Tibial artery (tissue), 4 donors: ENCODE measurements at regions of chr11 and their contacts with region 1.

Region 1: DNA sequence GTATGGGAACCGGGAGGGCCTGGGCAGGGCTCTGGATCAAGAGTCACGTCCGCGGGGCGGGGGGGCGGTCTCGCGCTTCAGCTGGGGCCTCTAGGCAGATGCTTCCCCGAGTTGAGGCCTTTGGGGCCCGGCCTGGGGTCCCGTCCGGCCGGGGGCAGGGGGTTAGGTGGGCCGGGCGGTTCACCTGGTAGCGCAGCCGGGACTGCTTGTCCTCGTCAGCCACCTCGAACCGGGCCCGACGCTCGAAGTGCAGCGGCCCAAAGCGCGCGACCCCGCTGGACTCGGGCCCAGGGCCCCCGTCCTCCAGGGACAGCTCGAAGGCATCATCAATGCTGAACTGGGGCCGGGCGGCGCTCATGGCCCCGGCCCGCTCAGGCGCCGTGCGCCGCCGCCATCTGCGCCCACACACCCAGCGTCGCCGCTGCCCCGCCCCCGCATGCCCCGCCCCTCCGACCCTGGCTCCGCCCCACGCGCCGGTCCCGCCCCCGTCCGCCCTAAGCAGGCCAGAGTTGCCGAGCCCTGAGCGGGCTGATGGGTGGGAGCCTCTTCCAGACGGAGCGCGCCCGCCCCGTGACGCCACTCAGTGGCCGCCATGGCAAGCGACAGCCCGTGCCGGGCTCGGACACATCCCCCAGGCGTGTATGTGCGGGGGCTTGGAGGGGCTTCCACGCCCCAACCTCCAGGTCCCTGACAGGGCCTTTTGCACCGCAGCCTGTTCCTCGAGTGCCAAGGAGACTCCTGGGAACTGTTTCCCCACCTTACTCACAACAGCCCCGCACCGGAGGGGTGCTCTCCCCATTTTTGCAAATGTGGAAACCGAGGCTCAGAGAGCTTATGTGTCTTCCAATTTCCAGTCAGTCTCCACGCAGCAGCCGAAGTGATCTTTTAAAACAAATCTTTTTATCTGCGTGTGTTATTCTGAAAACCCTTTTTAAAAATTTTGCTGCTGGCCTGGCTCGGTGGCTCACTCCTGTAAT is at the start of gene TMEM134:
- DNase-seq: peak; percentile 90 to 95
- H3K4me3 ChIP-seq: peak within 1 kb of the TSS; percentile 68 to 81
- H3K27ac ChIP-seq: peak within 1 kb of the TSS; percentile 84 to 95
- H3K4me1 ChIP-seq: peaks cover 0 to 47% (median 30%) of the 10 kb centered on the region in 4 donors
- H3K27me3 ChIP-seq: no peaks in the 10 kb centered on the region
- CTCF ChIP-seq: peak; percentile 36 to 51

Region 2: DNA sequence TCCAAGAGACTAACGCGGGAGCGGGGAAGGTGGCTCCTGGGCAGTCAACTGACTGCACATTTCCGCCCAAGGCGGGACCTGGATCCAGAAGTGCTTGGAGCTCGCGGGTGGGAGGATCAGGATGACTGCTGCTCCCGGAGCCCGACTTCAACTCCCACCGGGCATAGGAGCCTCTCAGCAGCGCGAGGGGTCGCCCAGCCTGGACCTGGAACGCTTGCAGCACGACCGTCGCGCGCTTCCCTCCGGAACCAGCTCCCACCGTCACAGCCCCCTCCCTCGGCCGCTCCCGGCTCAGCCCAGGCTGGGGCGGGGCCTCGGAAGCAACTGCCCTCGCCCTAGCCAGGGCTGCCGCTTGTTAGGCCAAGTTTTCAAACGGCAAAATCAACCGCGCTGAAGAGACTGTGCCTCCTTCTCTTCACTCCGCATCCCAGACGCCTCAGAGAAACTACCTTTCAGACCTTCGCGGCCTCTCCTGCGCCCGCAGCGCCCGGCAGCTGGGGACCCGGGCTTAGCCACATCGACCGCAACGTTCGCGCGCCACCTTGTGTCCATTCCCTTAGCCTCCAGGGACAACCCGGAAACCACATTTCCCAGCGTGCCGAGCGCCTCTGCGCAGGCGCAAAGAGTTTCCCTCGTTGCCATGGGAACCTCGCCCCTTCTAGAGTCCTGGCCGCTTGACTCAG is 151.8 kb before region 1 on chr11:
- intact Hi-C with region 1: no loop called
- DNase-seq: peak; percentile 94 to 97
- H3K4me3 ChIP-seq: peak overlapping the region; percentile 64 to 78
- H3K27ac ChIP-seq: peak overlapping the region; percentile 91 to 94
- H3K4me1 ChIP-seq: peaks cover 0 to 19% (median 10%) of the 10 kb centered on the region in 4 donors
- H3K27me3 ChIP-seq: no peaks in the 10 kb centered on the region
- CTCF ChIP-seq: peak; percentile 91 to 99

Region 3: GRCh38 chr11:67401495-67402191 is 67.5 kb before region 1 on chr11 and contains the start of gene PPP1CA:
- intact Hi-C with region 1: loop called (anchors 5 kb)
- DNase-seq: peak; percentile 82 to 95
- H3K4me3 ChIP-seq: peak within 1 kb of the TSS; percentile 89
- H3K27ac ChIP-seq: peak within 1 kb of the TSS; percentile 91 to 95
- H3K4me1 ChIP-seq: peaks cover 0 to 31% (median 25%) of the 10 kb centered on the region in 4 donors
- H3K27me3 ChIP-seq: peaks cover 0 to 29% of the 10 kb centered on the region in 2 donors
- CTCF ChIP-seq: peak; percentile 43 to 44

Region 4: GRCh38 chr11:67420646-67421420 is 48.3 kb before region 1 on chr11:
- intact Hi-C with region 1: loop called (anchors 5 kb)
- DNase-seq: peak; percentile 93 to 97
- H3K4me3 ChIP-seq: peak overlapping the region; percentile 64 to 80
- H3K27ac ChIP-seq: peak overlapping the region; percentile 93 to 95
- H3K4me1 ChIP-seq: peaks cover 5 to 53% (median 48%) of the 10 kb centered on the region in 4 donors
- H3K27me3 ChIP-seq: no peaks in the 10 kb centered on the region
- CTCF ChIP-seq: peak in 1 of 2 experiments; percentile 36

Region 5: DNA sequence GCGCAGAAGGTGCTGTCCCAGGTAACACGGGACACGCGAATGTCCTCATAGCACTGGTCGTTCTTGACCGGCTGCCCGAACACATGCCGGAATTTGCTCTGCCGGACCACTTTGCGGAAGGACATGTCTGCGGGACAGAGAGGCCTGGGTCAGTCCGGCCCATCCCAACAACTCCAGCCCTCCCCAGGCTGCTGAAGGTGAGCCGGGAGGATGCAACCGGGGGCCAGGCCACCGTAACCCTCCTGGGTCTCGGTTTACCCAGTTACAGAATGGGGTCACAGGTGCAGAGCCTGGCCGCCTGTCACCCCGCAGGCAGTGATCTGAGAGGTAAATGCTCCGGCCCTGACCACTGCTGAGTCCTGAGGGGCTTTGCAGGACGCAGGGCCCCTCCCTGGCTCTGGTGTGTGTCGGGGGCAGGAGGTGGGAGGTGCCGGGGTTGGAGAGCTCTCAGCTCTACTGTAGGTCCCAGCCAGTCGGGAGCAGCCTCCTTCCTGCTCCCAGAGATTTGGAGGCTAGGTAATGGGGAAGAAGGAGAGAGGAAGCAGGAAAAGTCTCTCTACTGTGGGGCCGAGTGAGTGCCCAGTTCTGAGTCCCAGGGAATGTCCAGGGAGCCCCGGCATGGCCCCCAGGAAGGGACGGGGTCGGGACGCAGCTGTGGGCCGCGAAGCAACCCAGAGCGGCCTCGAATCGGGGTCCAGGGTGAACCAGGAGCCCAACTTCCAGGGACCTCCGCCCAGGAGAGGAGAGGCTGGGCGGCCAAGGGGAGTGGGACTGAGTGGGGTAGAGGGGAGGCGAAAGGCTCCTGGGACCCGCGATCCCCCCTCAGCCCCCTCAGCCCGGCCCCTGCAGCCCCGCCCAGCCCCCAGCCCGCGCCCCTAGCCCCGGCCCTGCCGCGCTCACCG is 26.4 kb before region 1 on chr11:
- intact Hi-C with region 1: loop called (anchors 2 kb)
- DNase-seq: no peak
- H3K4me3 ChIP-seq: peak overlapping the region; percentile 89 to 90
- H3K27ac ChIP-seq: peak overlapping the region; percentile 96 to 98
- H3K4me1 ChIP-seq: peaks cover 0 to 49% (median 28%) of the 10 kb centered on the region in 4 donors
- H3K27me3 ChIP-seq: no peaks in the 10 kb centered on the region
- CTCF ChIP-seq: no peak

Region 6: GRCh38 chr11:67507864-67508485 is 38.9 kb after region 1 on chr11 and contains the start of gene CDK2AP2:
- intact Hi-C with region 1: loop called (anchors 2 kb)
- DNase-seq: peak; percentile 99 to 100
- H3K4me3 ChIP-seq: peak within 1 kb of the TSS; percentile 76 to 80
- H3K27ac ChIP-seq: peak within 1 kb of the TSS; percentile 92 to 99
- H3K4me1 ChIP-seq: peaks cover 0 to 49% (median 43%) of the 10 kb centered on the region in 4 donors
- H3K27me3 ChIP-seq: peaks cover 0 to 5% of the 10 kb centered on the region in 2 donors
- CTCF ChIP-seq: peak in 1 of 2 experiments; percentile 29